ENCODE measurements at regions of chrX and their contacts with region 1.

Region 1: GRCh38 chrX:68710870-68711576 is 63.6 kb downstream of the STARD8 start:
- DNase-seq: peak; percentile 65
- ATAC-seq: peak; percentile 69
- H3K4me3 Mint-ChIP-seq: no peak overlapping the region
- H3K27ac Mint-ChIP-seq: no peak overlapping the region
- H3K4me1 Mint-ChIP-seq: peaks cover 16% of the 10 kb centered on the region
- H3K27me3 Mint-ChIP-seq: no peaks in the 10 kb centered on the region
- CTCF ChIP-seq: peak; percentile 73; the same call in 1 of the 2 replicates

Region 2: DNA sequence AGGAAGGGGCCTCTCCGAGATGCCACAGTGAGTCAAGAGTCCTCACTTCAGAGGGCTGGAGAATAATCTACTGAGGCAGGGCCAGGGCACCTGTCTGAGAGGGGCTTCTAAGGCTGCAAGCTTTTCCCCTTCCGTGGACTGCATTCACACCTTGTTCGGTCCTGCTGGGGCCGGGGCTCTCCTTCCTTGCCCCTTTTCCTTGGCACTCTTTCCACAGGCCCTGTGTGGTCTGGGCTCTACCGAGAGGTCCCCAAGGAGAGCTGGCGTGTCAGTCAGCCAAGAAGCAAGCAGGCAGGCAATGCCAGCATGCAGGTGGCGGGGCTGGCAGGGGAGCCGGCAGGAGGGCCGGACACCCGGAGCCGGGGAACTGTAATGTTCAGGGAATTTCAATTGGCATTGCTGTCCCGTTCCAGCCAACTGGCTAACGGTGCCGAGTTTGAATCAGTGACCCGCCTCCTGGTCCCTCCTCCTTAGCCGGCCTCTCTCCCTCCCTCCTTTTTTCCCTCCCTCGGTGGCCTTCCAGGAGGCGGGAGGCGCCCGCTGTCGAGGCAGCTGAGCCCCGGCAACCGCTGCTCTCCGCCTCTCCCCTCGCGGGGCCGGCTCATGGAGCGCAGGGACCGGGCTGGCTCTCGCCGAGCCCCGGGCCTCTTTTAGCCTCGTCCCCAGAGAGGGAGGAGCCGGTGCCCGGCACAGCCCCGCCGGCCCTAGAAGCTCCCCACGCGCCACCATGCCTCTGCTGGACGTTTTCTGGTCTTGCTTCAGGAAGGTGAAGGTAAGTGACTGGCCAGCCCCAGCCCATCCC is 63.7 kb before region 1 on chrX and contains the start of gene STARD8:
- CTCF ChIA-PET with region 1: interaction called, 10 read pairs
- POLR2A ChIA-PET with region 1: no interaction called
- DNase-seq: peak; percentile 54
- ATAC-seq: peak; percentile 85
- H3K4me3 Mint-ChIP-seq: peak within 1 kb of the TSS; percentile 45
- H3K27ac Mint-ChIP-seq: no peak within 1 kb of the TSS
- H3K4me1 Mint-ChIP-seq: peaks cover 11% of the 10 kb centered on the region
- H3K27me3 Mint-ChIP-seq: peaks cover 11% of the 10 kb centered on the region
- CTCF ChIP-seq: no peak
- total RNA-seq, gene STARD8: 3.1 to 8.5 TPM (median 3.8 TPM) in 3 replicates

Region 3: DNA sequence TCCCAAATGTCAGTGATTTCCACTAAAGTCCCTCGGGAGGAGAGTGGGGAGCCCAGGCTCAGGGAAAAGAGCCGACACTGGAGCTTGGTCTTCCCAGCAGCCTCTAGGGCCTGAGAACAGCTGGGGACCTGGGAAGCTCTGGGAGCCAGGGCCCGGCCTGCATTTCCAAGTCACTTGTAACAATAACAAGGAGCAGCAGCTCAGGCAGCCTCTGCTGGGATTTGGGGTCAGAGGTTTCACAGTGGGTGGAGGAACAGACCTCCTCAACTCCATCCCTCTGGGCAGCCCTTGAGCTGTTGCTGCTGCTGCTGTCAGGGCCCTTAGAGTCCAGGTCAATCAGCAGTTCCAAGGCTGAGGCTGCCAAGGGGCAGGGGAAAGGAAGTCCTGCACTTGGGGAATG is 52.5 kb before region 1 on chrX:
- CTCF ChIA-PET with region 1: interaction called, 10 read pairs
- POLR2A ChIA-PET with region 1: no interaction called
- DNase-seq: no peak
- ATAC-seq: no peak
- H3K4me3 Mint-ChIP-seq: no peak overlapping the region
- H3K27ac Mint-ChIP-seq: no peak overlapping the region
- H3K4me1 Mint-ChIP-seq: peaks cover 16% of the 10 kb centered on the region
- H3K27me3 Mint-ChIP-seq: no peaks in the 10 kb centered on the region
- CTCF ChIP-seq: no peak

Region 4: GRCh38 chrX:68686097-68686977 is 24.7 kb before region 1 on chrX:
- CTCF ChIA-PET with region 1: interaction called, 18 read pairs
- POLR2A ChIA-PET with region 1: no interaction called
- DNase-seq: peak; percentile 67
- ATAC-seq: peak; percentile 76
- H3K4me3 Mint-ChIP-seq: peak overlapping the region; percentile 64
- H3K27ac Mint-ChIP-seq: no peak overlapping the region
- H3K4me1 Mint-ChIP-seq: peaks cover 31% of the 10 kb centered on the region
- H3K27me3 Mint-ChIP-seq: peaks cover 8% of the 10 kb centered on the region; the same call in 1 of the 2 replicates
- CTCF ChIP-seq: no peak

Region 5: GRCh38 chrX:68693481-68694434 is 17.3 kb before region 1 on chrX:
- CTCF ChIA-PET with region 1: interaction called, 11 read pairs
- POLR2A ChIA-PET with region 1: no interaction called
- DNase-seq: peak; percentile 83
- ATAC-seq: peak; percentile 91
- H3K4me3 Mint-ChIP-seq: peak overlapping the region; percentile 64
- H3K27ac Mint-ChIP-seq: no peak overlapping the region
- H3K4me1 Mint-ChIP-seq: peaks cover 33% of the 10 kb centered on the region
- H3K27me3 Mint-ChIP-seq: peaks cover 10% of the 10 kb centered on the region
- CTCF ChIP-seq: no peak

Region 6: GRCh38 chrX:68846536-68846935 is 135.5 kb after region 1 on chrX:
- CTCF ChIA-PET with region 1: no interaction called
- POLR2A ChIA-PET with region 1: no interaction called
- DNase-seq: peak; percentile 72
- ATAC-seq: peak; percentile 95
- H3K4me3 Mint-ChIP-seq: peak overlapping the region; percentile 38; the same call in 1 of the 2 replicates
- H3K27ac Mint-ChIP-seq: no peak overlapping the region; the same call in 1 of the 2 replicates
- H3K4me1 Mint-ChIP-seq: peaks cover 43% of the 10 kb centered on the region
- H3K27me3 Mint-ChIP-seq: peaks cover 24% of the 10 kb centered on the region
- CTCF ChIP-seq: no peak